ENCODE measurements at regions of chr19 and their contacts with region 1.

Region 1: GRCh38 chr19:29714953-29715700 is at the start of gene C19orf12:
- DNase-seq: peak; percentile 75
- ATAC-seq: peak; percentile 69
- H3K4me3 Mint-ChIP-seq: peak within 1 kb of the TSS; percentile 95
- H3K27ac Mint-ChIP-seq: peak within 1 kb of the TSS; percentile 96
- H3K4me1 Mint-ChIP-seq: peaks cover 57% of the 10 kb centered on the region
- H3K27me3 Mint-ChIP-seq: no peaks in the 10 kb centered on the region
- total RNA-seq, gene C19orf12: 38.7 to 41.0 TPM

Region 2: DNA sequence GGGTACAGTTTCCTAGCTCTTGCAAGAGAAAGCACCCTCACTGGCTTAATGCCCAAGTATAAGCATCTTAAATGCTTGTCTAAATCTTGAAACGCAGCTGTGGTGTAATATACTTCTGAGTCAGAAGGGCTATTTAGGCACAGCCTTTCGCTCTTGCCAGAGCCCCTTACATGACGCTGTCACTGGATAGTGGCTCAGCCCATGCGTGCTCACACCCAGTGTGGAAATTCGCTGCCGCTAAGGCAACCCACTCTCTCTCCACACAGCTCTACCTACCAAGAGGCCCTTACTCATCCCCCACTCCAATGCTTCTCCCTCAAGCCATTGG is 526.1 kb before region 1 on chr19:
- CTCF ChIA-PET with region 1: no interaction called
- POLR2A ChIA-PET with region 1: no interaction called
- DNase-seq: no peak
- ATAC-seq: no peak
- H3K4me3 Mint-ChIP-seq: no peak overlapping the region
- H3K27ac Mint-ChIP-seq: no peak overlapping the region
- H3K4me1 Mint-ChIP-seq: peaks cover 4% of the 10 kb centered on the region
- H3K27me3 Mint-ChIP-seq: no peaks in the 10 kb centered on the region

Region 3: GRCh38 chr19:29622138-29623070 is 92.7 kb before region 1 on chr19:
- CTCF ChIA-PET with region 1: interaction called, 48 read pairs
- POLR2A ChIA-PET with region 1: interaction called, 6 read pairs
- DNase-seq: peak; percentile 60
- ATAC-seq: peak; percentile 71
- H3K4me3 Mint-ChIP-seq: peak overlapping the region; percentile 81
- H3K27ac Mint-ChIP-seq: peak overlapping the region; percentile 95
- H3K4me1 Mint-ChIP-seq: peaks cover 67% of the 10 kb centered on the region
- H3K27me3 Mint-ChIP-seq: peaks cover 3% of the 10 kb centered on the region

Region 4: DNA sequence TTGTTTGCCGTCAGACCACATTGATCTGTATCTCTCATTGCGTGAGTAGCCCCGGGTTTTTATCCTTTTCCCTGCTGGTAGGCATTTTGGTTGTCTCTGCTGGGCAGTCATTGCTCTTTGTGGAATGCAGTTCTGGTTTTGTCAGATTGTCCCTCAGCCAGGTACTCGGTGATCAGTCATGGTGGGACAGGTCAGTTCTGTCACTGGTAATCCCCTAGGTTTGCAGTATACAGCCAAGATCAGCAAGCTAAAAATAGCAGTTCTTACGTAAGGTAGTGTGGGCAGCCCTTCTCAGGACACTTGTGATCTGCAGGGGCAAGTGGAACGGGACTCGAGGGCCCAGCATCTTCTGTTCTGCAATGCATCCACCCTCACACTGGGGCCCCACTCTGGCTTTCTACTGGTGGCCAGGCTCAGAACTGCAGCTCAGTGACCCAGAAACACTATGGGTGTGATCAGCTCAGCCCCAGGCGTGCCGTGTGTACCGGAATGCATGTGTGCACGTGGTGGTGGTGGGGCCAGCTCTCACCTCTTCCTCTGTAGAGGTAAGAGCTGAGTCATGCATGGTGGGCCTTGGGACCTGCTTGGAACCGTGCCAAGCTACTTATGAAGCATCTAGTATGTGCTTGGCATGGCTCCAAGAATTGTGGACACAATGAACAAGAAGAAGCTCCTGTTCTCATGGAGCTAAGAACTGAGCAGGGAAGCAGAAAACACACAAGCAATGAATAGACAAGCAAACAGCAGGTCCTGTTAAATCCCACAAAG is 43.5 kb before region 1 on chr19:
- CTCF ChIA-PET with region 1: interaction called, 96 read pairs
- POLR2A ChIA-PET with region 1: interaction called, 36 read pairs
- DNase-seq: peak; percentile 92
- ATAC-seq: peak; percentile 63
- H3K4me3 Mint-ChIP-seq: peak overlapping the region; percentile 58
- H3K27ac Mint-ChIP-seq: peak overlapping the region; percentile 87
- H3K4me1 Mint-ChIP-seq: peaks cover 91% of the 10 kb centered on the region
- H3K27me3 Mint-ChIP-seq: no peaks in the 10 kb centered on the region

Region 5: DNA sequence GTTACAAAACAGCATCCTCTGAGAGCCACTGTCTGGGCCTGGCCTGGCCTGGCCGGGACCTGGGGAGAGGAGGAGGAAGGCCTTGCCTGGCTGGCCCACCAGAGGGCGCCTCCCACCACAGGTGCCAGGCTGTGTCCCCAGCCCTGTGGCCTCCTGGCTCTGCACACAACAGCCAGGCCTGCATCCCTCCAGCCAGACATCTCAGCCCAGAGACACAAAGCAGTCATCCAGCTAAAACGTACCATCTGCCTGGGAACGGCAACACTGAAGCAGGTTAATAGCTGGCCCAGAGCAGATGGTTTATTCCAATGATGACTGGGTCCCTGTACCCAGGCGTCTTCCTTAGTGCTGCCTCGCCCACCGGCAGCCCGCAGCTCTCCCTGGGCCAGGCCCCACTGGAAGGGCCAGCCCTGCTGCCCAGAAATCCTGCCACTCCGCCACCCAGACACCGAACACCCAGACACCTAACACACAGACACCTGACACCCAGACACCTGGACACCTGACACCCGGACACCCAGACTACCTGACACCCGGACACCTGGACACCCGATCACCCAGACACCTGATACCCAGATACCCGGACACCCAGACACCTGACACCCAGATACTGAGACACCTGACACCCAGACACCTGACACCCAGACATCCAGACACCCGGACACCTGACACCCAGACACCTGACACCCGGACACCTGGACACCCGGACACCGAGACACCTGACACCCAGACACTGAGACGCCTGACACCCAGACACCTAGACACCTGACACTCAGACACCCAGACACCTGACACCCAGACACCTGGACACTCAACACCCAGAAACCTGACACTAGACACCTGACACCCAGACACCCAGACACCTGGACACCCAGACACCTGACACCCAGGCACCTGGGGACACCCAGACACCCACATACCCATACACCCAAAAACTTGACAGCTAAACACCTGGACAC is 20.2 kb before region 1 on chr19:
- CTCF ChIA-PET with region 1: interaction called, 199 read pairs
- POLR2A ChIA-PET with region 1: interaction called, 11 read pairs
- DNase-seq: peak; percentile 88
- ATAC-seq: peak; percentile 98
- H3K4me3 Mint-ChIP-seq: no peak overlapping the region
- H3K27ac Mint-ChIP-seq: peak overlapping the region; percentile 77
- H3K4me1 Mint-ChIP-seq: peaks cover 20% of the 10 kb centered on the region
- H3K27me3 Mint-ChIP-seq: no peaks in the 10 kb centered on the region

Region 6: DNA sequence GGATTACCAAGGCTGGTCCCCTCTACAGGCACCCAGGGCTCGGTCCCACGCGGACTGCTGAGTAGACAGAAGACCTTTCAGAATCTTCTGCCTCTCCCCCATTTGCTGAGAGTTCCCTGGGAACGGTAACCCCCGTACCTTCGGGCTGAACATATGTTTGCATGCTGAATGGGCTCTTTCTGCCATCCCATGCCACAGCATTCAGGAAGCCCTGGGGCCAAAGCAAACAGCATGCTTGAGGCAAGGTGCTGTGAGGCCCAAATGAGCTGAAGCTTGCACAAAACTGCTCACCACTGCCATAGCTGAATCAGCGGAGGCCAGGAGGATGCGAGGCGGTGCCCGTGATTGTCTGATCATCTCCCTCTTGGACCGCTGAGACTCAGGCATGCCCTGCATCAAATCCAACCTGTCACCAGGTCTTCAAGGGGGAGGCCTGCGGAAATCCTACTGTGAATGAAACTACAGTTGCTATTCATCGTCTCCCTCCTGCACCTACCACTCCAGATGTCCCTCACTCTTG is 16.3 kb after region 1 on chr19:
- CTCF ChIA-PET with region 1: interaction called, 35 read pairs
- POLR2A ChIA-PET with region 1: no interaction called
- DNase-seq: no peak
- ATAC-seq: no peak
- H3K4me3 Mint-ChIP-seq: no peak overlapping the region
- H3K27ac Mint-ChIP-seq: no peak overlapping the region
- H3K4me1 Mint-ChIP-seq: no peaks in the 10 kb centered on the region
- H3K27me3 Mint-ChIP-seq: peaks cover 23% of the 10 kb centered on the region